Activated T-helper 1 cell treated with anti-CD3 and anti-CD28 coated beads, Interleukin-12 subunit alpha, Interleukin-12 subunit beta, Interleukin-2, Interleukin-4 antibody, amounts not matched to agents 30 ng/mL and 10 ng/mL and 1 ng/mL, durations not matched to agents 14 hours and 24 hours and 36 hours (primary cell): ENCODE measurements at regions of chr19 and their contacts with region 1.

Region 1: GRCh38 chr19:52734893-52735661 is at the start of gene ZNF611:
- DNase-seq: peak; percentile 97
- H3K4me3 Mint-ChIP-seq: peak within 1 kb of the TSS; percentile 91
- H3K27ac Mint-ChIP-seq: peak within 1 kb of the TSS; percentile 92
- H3K4me1 Mint-ChIP-seq: peaks cover 27% of the 10 kb centered on the region
- H3K27me3 Mint-ChIP-seq: no peaks in the 10 kb centered on the region
- total RNA-seq, gene ZNF611: 17.0 and 21.0 TPM in 2 replicates

Region 2: DNA sequence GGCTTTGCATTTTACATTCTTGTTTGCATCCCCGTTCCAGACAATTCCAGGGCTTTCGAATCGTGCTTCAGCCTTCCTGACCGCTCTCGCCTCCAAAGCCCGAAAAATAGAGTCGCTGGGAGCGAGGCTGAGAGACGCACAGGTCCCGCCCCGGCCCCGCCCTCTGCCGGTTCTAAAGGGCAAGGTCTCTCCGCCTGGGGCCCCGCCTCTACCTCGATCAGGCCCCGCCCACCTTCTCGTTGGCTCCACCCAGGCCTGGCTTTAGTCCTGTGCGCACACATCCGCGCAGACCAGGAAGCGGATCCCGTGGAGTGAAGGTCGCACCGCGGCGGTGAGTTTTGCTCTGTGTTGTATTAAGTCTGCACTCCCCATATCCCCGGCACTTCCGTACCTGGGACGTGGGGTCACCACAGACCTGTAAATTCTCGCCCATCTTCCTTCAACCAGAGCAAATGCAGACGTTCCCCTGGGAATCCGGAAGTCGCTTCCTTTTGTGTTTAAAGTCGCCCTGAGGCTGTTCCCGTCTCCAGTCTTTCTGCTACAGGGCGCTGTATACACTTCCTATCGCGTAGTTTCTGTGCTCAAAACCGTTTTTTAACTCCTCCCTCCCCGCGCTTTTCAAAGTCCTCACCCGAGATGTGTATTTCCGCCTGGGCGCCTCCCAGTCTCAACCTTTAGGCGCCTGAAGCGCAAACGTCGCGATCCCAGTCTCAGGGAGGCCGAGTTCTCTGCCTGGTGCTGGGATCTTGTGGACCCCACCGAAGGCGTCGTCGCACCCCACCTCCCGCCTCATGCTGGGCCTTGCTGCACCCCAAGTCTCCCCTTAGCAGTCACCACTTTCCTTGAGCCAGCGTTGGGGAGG is 164.8 kb before region 1 on chr19 and contains the start of gene ZNF701:
- intact Hi-C with region 1: loop called (anchors 1 kb)
- DNase-seq: peak; percentile 94
- H3K4me3 Mint-ChIP-seq: peak within 1 kb of the TSS; percentile 94
- H3K27ac Mint-ChIP-seq: peak within 1 kb of the TSS; percentile 94
- H3K4me1 Mint-ChIP-seq: peaks cover 20% of the 10 kb centered on the region
- H3K27me3 Mint-ChIP-seq: no peaks in the 10 kb centered on the region
- total RNA-seq, gene ZNF701: 16.0 and 18.3 TPM in 2 replicates

Region 3: GRCh38 chr19:52786457-52787359 is 51.6 kb after region 1 on chr19 and contains the start of gene ZNF600:
- intact Hi-C with region 1: loop called (anchors 1 kb)
- DNase-seq: peak; percentile 52
- H3K4me3 Mint-ChIP-seq: peak within 1 kb of the TSS; percentile 90
- H3K27ac Mint-ChIP-seq: peak within 1 kb of the TSS; percentile 75
- H3K4me1 Mint-ChIP-seq: peaks cover 26% of the 10 kb centered on the region
- H3K27me3 Mint-ChIP-seq: no peaks in the 10 kb centered on the region
- total RNA-seq, gene ZNF600: 11.9 and 13.4 TPM in 2 replicates

Region 4: DNA sequence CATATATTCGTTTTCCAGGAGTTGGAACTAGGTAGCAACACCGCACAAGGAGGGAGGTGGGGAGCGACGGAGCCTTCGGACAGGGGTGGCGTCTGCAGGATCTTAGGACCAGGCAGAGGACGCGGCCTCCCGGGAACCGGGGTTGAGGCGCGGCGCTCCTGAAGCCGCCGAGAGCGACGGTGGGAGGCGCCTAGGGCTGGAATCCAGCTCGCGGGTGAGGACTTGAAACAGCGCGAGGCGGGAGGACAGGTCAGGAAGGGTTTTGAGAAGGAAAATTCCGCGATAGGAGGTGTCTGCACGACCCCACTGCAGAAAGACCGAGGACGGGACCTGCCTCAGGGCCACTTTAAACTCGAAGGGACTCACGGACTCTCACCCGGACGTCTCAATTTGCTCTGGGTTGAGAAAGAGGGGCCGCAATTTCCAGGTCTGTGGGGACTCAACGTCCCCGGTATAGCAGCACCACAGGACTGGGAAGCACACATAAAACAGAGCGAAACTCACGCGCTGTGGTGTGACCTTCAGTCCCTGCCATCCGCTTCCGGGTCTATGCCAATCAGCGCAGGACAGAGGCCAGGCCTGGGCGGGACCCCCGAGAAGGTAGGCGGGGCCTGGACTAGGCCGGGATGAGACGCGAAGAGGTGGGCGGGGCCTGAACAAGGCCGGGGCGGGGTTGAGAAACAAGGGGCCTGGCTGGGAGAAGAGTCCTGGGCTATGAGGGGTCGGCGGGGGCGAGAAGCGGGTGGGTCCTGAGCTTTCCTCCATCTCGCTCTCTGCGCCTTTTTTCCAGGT is 162.3 kb after region 1 on chr19 and contains the start of gene ZNF320:
- intact Hi-C with region 1: loop called (anchors 1 kb)
- DNase-seq: peak; percentile 90
- H3K4me3 Mint-ChIP-seq: peak within 1 kb of the TSS; percentile 92
- H3K27ac Mint-ChIP-seq: peak within 1 kb of the TSS; percentile 87
- H3K4me1 Mint-ChIP-seq: peaks cover 4% of the 10 kb centered on the region
- H3K27me3 Mint-ChIP-seq: no peaks in the 10 kb centered on the region
- total RNA-seq, gene ZNF320: 10.5 and 11.0 TPM in 2 replicates